Activated CD4-positive, alpha-beta T cell treated with anti-CD3 and anti-CD28 coated beads, Interleukin-2, amount 10 ng/mL, durations not matched to agents 24 days and 14 days (primary cell): ENCODE measurements at regions of chr13 and their contacts with region 1.

Region 1: DNA sequence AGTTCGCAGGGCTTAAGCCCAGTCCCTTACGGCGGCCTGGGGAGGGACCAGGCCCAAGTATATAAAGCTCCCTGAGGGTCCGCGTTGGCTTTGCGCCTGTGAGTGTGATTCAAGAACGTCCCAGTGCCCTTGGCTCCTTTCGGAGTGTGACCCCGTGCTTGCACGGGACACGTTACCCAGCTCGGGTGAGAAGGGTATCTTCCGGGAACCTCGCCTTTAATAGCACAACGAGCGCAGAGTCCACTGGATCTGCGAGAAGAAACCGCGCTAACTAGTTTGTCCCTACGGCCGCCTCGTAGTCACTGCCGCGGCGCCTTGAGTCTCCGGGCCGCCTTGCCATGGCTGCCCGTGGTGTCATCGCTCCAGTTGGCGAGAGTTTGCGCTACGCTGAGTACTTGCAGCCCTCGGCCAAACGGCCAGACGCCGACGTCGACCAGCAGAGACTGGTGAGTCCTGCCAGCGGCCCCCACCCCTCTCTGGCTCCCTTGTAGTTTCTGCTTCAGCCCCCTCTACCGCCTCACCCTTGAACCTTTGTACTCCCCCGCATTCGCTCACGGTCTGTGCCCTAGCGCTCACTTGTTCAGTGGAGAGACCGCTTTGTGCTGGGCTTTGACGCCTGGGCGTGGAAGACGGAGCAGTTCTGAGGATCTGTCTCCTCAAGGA is at the start of gene DNAJC15:
- DNase-seq: peak; percentile 95
- H3K4me3 Mint-ChIP-seq: peak within 1 kb of the TSS; percentile 98
- H3K27ac Mint-ChIP-seq: peak within 1 kb of the TSS; percentile 94
- H3K4me1 Mint-ChIP-seq: peaks cover 24% of the 10 kb centered on the region
- H3K27me3 Mint-ChIP-seq: no peaks in the 10 kb centered on the region
- total RNA-seq, gene DNAJC15: 16.6 and 17.8 TPM in 2 replicates

Region 2: GRCh38 chr13:42985312-42986175 is 37.9 kb before region 1 on chr13:
- intact Hi-C with region 1: loop called (anchors 5 kb)
- DNase-seq: no peak
- H3K4me3 Mint-ChIP-seq: no peak overlapping the region
- H3K27ac Mint-ChIP-seq: no peak overlapping the region
- H3K4me1 Mint-ChIP-seq: peaks cover 53% of the 10 kb centered on the region
- H3K27me3 Mint-ChIP-seq: no peaks in the 10 kb centered on the region

Region 3: GRCh38 chr13:43044720-43045301 is 21.4 kb after region 1 on chr13:
- intact Hi-C with region 1: loop called (anchors 1 kb)
- DNase-seq: peak; percentile 8
- H3K4me3 Mint-ChIP-seq: peak overlapping the region; percentile 20
- H3K27ac Mint-ChIP-seq: peak overlapping the region; percentile 52
- H3K4me1 Mint-ChIP-seq: peaks cover 54% of the 10 kb centered on the region
- H3K27me3 Mint-ChIP-seq: no peaks in the 10 kb centered on the region

Region 4: GRCh38 chr13:43054803-43055802 is 31.7 kb after region 1 on chr13:
- intact Hi-C with region 1: loop called (anchors 2 kb)
- DNase-seq: peak; percentile 74
- H3K4me3 Mint-ChIP-seq: no peak overlapping the region
- H3K27ac Mint-ChIP-seq: no peak overlapping the region
- H3K4me1 Mint-ChIP-seq: peaks cover 28% of the 10 kb centered on the region
- H3K27me3 Mint-ChIP-seq: no peaks in the 10 kb centered on the region

Region 5: GRCh38 chr13:43303033-43303729 is 279.8 kb after region 1 on chr13:
- intact Hi-C with region 1: no loop called
- DNase-seq: peak; percentile 58
- H3K4me3 Mint-ChIP-seq: no peak overlapping the region
- H3K27ac Mint-ChIP-seq: no peak overlapping the region
- H3K4me1 Mint-ChIP-seq: no peaks in the 10 kb centered on the region
- H3K27me3 Mint-ChIP-seq: peaks cover 33% of the 10 kb centered on the region